GM13977 (cell line): ENCODE measurements at regions of chr1 and their contacts with region 1.

Region 1: DNA sequence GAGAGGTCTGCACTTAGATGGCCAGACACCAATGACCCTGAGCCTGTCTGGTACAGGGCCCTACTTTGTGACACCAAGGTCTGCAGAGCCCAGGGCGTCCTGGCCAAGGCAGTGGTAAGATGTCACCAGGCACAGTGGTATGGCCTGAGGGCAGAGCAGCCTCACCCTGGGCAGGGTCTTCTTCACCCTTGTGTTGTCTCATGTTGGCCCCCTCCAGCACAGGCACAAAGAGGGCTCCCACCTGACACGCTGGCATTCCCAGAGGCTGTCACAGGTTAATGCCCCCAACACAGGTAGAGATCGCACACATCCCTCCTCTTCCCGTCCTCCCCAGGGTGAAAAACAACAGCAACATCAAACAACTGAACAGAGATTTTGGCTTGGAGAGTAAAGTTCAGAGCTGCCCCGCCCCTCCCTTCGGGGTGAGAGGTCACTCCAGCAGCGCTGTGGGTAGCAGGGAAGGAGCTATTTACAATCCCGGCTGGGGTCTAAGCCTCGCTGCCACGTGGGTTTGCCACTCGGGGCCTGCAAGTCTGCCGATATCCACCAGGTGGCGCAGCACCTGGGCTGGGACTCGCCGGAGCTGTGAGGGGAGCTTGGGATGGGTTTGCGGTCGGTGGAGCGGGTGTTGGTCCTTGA is 12.6 kb downstream of the EFNA3 start:
- DNase-seq: peak; percentile 78
- CTCF ChIP-seq: peak; percentile 94

Region 2: DNA sequence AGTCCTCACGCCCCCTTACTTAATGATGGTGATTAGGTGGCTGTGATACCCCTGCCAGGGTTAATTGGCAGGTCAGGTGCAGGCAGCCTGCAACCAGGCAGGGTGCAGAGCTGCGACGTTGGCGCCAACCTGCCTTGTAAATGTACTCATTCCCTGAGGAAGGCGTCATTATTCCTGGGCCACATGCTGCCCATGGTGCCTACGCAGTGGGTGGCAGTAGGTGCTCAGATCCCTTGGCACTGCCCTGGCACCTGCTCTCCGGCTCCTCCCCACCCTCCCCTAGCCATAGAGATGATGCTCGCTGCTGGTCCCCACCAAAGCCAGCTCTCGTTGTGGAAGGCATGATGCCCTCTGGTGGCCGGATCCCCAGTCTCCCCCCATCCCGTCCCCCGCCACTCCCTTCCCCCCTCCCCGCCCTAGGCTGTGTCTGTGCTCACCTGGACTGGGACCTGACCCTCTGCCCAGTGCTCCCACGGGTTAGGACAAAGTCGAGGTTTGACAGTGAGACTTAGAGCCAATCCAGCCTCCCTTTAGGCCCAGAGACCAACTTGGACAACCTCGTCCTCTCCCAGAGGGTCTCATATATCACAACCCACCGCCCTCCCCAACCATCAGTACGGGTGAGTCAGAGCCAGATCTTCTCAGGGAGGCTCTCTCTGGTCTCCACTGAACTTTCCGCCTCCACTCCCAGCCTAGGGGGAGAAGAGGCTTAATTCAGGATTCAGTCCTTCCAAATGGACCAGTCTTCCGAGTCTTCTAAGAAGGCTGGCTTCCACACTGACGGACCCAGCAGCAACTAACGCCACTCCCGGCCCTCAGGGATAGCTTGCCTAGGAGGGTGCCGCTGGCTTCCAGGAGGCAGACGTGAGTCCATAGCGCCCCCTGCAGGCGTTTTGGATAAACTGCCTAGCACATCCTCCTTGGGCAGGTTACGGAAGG is 76.2 kb after region 1 on chr1:
- in situ Hi-C with region 1: loop called (anchors 5 kb)
- DNase-seq: peak; percentile 79
- CTCF ChIP-seq: peak; percentile 91